ENCODE measurements at regions of chr18 and their contacts with region 1.

Region 1: GRCh38 chr18:70288851-70289328 is at the start of gene SOCS6:
- DNase-seq: peak; percentile 86
- total RNA-seq, gene SOCS6: 16.1 to 16.7 TPM

Region 2: DNA sequence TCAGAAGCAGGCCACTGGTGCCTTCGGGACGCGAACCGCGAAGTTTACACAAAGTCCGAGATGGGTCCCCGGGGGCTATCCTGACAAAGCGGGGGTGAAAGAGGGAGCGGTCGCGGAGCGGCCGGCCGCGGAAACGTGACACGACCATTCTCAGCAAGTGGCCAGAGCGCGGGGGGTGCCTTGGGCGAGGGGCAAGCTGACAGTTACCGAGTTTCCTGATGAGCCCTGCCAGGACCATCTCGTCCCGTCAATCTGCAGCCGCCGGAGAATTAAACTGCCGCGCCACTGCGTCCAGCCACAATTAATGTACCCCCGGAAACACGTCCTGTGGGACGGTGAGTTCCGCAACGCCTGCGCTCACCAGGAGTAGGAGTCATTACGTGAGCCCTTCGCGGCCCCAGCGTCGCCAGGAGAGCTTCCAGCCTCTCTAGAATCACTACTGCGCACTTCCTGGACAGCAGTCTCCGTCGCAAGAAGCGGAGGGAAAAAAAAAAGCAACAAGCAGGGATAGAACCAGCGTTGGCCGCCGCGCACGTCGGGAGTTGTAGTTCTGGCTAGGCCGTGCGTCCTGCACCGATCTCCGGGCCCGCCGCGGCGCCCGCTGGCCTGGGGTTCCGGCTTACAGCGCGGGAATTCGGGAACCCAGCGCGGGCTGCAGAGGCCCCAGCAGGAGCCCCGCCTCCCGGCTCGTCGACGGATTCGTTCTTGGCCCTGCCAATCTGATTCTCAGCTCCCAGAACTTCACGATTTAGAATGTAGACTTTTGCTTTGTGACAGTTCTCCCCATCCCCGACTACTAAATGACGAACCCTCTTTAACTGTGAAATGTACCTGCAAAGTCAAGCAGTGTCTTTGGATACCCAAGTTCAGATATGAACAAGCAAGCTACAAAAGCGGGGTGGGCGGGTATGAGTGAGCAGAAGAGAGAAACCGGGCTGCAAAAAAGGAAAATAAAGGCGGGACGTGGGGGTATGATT is 83.2 kb before region 1 on chr18 and contains the start of gene RTTN:
- intact Hi-C with region 1: loop called in 1 of 2 experiments (anchors 5 kb)
- DNase-seq: peak; percentile 98
- total RNA-seq, gene RTTN: 9.4 to 9.7 TPM

Region 3: DNA sequence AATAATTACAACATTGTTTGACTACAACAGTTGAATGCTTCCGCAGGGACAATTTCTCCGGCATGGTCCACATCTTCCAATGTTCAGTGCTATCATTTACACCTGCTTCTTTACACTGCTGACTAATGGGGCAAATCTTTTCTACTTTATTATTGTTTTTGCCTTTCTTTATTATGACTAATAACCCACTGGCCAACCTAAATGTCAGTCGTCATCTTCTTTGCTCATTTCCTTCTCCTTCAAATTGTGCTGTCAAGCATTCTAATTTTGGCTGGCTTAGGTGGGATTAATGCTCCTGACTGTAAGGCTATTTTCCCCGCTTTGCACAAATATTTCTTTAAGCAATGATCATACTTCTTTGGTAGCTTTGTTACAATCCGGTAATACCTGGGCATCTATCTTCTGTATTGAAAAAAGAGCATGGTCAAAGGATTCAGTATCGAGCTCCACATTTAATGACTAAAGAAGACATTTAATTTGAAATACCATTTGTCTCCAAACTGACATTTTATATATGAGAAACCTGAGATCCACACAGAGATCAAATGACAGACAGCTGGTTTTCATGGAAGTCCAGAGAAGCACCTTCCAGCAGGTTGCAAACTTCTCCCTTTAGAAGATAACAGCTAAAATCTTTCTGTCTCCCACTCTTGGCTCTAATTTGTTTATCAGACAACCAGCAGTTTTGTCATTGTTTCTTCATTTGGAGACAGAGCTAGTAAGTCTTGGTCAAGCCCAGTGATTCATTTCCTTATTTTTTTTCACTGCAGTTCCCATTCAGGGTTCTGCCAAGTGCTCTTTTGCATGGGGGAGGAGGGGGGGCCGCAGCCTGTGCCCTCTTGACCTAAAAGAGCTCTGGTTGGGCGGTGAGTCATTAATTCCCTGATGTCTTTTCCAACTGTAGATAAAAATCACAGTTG is 132.8 kb after region 1 on chr18:
- intact Hi-C with region 1: loop called in 1 of 2 experiments (anchors 10 kb)
- DNase-seq: peak; percentile 94